Adrenal gland (tissue), 19 donors: ENCODE measurements at regions of chr11 and their contacts with region 1.

Region 1: DNA sequence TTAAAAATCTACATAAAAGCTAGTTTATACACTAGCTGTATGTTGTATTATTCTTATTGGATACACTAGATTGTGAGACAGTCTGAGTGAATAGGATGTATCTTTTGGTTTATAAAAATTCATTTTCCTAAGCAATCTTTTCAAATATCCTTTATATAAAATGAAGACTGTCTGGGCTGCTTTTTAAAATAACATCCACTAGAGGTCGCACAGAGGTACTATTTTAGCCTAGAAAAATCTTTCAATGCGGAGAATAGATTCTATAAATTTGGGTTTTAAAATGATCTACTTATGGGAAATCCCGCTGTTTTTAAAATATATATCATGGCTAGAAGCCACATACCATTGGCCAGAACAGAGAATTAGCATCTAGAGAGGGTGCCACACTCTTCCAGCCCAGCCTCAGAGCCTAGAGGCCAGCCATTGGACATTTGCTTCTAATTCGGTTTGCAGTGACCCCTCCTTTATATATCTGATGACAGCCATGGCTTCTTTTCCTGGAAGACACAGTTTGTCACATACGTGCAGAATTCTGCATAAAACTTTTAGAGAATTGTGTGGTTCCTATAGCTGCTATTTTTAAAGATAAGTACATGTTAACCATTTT is 7.3 kb downstream of the C11orf97 start:
- DNase-seq: peak in 1 of 7 donors; percentile 30
- H3K4me3 ChIP-seq: no peak overlapping the region
- H3K27ac ChIP-seq: no peak overlapping the region
- H3K4me1 ChIP-seq: peaks cover 0 to 4% of the 10 kb centered on the region in 2 donors
- H3K27me3 ChIP-seq: no peaks in the 10 kb centered on the region
- CTCF ChIP-seq: peak; percentile 45 to 77 (median 56)
- POLR2A ChIP-seq: no peak

Region 2: DNA sequence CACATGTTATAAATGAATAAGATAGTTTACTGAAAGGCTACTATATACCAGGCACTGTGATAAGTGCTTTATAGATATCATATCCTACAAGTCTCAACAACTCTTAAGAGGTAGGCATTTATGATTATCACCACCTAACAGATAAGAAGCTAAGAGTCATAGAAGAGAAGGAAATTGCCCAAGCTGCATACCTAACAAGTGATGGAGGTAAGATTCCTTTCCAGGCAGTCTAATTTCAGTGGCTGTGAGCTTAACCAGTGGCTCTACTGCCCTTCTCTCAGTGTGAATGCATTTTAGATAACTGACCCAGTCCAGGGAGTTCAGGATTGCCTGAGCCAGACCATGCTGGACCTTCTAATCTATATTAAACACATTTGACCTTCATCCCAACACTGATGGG is 459.2 kb before region 1 on chr11:
- intact Hi-C with region 1: no loop called
- DNase-seq: no peak
- H3K4me3 ChIP-seq: no peak overlapping the region
- H3K27ac ChIP-seq: no peak overlapping the region
- H3K4me1 ChIP-seq: no peaks in the 10 kb centered on the region
- H3K27me3 ChIP-seq: no peaks in the 10 kb centered on the region
- CTCF ChIP-seq: no peak
- POLR2A ChIP-seq: no peak

Region 3: DNA sequence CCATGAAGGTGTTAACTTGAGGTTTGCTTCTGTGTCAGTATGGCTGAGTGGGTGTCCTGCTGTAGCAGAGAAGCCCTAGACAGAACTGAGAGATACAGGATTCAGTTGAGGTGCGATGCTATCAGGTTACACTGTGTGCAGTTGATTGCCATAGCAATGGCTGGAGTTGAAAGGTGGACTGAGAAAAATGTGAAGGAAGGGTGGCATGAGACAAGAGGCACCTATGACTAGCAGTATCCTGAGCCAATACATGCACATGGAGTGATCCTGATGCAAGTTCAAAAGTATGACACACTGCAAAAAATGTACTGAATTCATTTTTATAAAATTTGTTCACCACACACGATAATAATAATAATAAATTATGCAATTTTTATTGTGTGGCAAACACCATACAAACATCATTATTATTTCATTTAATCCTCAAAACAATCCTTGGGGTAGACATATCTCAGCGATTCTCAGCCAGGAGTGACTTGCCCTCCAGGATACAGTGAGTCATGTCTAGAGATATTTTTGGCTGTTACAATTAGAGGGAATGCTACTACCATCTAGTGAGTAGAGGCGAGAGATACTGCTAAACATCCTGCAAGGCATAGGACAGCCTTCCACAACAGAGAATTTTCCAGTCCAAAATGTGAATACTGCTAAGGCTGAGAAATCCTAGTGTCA is 43.7 kb after region 1 on chr11:
- intact Hi-C with region 1: loop called in 1 of 2 experiments (anchors 5 kb)
- DNase-seq: peak in 1 of 7 donors; percentile 7
- H3K4me3 ChIP-seq: no peak overlapping the region
- H3K27ac ChIP-seq: no peak overlapping the region
- H3K4me1 ChIP-seq: peaks cover 4 to 8% of the 10 kb centered on the region in 2 donors
- H3K27me3 ChIP-seq: no peaks in the 10 kb centered on the region
- CTCF ChIP-seq: peak in 5 of 6 experiments; percentile 21 to 39 (median 26)
- POLR2A ChIP-seq: no peak

Region 4: GRCh38 chr11:94593030-94593429 is 73.4 kb after region 1 on chr11:
- intact Hi-C with region 1: loop called in 1 of 2 experiments (anchors 10 kb)
- DNase-seq: no peak
- H3K4me3 ChIP-seq: no peak overlapping the region
- H3K27ac ChIP-seq: no peak overlapping the region
- H3K4me1 ChIP-seq: no peaks in the 10 kb centered on the region
- H3K27me3 ChIP-seq: no peaks in the 10 kb centered on the region
- CTCF ChIP-seq: no peak
- POLR2A ChIP-seq: no peak